Esophagus squamous epithelium (tissue), 5 donors: ENCODE measurements at regions of chr3 and their contacts with region 1.

Region 1: DNA sequence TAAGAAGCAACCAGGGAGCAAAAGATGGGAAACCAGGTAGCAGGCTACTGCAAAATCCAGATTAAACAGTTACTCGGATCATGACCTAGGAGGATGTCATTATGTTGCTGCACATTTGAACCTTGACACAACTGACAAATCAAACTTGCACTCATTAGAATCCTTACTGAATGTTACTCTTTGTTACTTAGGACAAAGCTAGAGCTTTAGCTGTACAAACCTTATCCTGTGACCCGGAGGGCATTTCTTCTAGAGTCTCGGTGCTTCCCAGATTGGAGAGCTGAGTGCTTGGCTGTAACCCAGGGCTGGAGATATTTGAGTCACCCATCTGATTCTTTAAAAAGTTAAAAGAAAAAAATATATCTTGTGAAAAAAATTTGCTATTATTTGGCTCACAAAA is 43.4 kb downstream of the DCP1A start:
- DNase-seq: no peak
- H3K4me3 ChIP-seq: no peak overlapping the region
- H3K27ac ChIP-seq: peak overlapping the region in 1 of 4 donors; percentile 4
- H3K4me1 ChIP-seq: peaks cover 0 to 25% (median 2%) of the 10 kb centered on the region in 3 donors
- H3K27me3 ChIP-seq: no peaks in the 10 kb centered on the region
- CTCF ChIP-seq: no peak
- POLR2A ChIP-seq: no peak

Region 2: DNA sequence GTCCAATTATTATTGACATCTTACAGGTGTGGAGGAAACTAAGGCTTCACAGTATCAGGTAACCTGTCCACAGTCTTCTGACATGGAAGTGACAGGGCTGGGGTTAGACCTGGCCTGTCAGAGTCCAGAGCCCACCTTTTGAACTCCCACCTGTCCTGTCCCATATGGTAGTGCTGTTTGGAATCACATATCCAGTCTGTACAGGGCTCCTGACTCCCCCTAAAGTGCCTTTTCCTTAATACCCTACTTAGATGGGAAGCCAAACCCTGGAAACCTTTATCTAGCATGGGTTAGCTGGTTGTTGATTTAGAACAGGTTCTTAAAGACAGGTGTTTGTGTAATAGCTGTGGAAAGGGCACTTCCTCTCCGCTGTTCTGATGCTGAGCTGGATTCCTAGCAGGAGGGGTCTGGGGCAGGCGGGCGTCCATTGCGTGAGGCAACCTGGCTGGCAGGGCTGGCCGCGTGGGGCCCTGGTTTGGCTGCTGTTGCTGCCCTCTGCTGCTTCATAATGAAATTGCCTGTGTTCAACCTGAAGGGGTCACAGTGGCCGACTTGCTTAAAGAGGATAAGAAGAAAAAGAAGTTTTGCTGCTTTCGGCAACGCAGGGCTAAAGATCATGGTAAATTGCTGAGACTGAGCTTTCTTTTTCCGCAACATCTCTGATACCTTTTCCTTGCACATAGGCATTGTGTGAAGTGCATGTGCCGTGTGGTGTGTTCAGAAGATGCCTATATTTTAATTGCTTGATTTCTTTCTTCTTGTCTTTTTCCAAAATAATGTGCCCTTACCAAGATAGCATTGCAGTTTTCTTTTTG is 406.1 kb after region 1 on chr3:
- intact Hi-C with region 1: loop called (anchors 10 kb)
- DNase-seq: no peak
- H3K4me3 ChIP-seq: no peak overlapping the region
- H3K27ac ChIP-seq: no peak overlapping the region
- H3K4me1 ChIP-seq: peaks cover 0 to 14% (median 0%) of the 10 kb centered on the region in 3 donors
- H3K27me3 ChIP-seq: no peaks in the 10 kb centered on the region
- CTCF ChIP-seq: peak; percentile 59 to 83 (median 76)
- POLR2A ChIP-seq: no peak